MCF 10A (cell line): ENCODE measurements at regions of chr11 and their contacts with region 1.

Region 1: GRCh38 chr11:74929431-74930363 is 19.2 kb downstream of the XRRA1 start:
- DNase-seq: peak; percentile 94
- H3K4me3 Mint-ChIP-seq: no peak overlapping the region
- H3K27ac Mint-ChIP-seq: no peak overlapping the region
- H3K4me1 Mint-ChIP-seq: peaks cover 4% of the 10 kb centered on the region
- H3K27me3 Mint-ChIP-seq: no peaks in the 10 kb centered on the region
- CTCF ChIP-seq: peak; percentile 84

Region 2: GRCh38 chr11:74776546-74776945 is 153.2 kb before region 1 on chr11:
- CTCF ChIA-PET with region 1: no interaction called
- POLR2A ChIA-PET with region 1: no interaction called
- intact Hi-C with region 1: no loop called
- DNase-seq: no peak
- H3K4me3 Mint-ChIP-seq: no peak overlapping the region
- H3K27ac Mint-ChIP-seq: no peak overlapping the region
- H3K4me1 Mint-ChIP-seq: peaks cover 18% of the 10 kb centered on the region
- H3K27me3 Mint-ChIP-seq: no peaks in the 10 kb centered on the region
- CTCF ChIP-seq: no peak

Region 3: DNA sequence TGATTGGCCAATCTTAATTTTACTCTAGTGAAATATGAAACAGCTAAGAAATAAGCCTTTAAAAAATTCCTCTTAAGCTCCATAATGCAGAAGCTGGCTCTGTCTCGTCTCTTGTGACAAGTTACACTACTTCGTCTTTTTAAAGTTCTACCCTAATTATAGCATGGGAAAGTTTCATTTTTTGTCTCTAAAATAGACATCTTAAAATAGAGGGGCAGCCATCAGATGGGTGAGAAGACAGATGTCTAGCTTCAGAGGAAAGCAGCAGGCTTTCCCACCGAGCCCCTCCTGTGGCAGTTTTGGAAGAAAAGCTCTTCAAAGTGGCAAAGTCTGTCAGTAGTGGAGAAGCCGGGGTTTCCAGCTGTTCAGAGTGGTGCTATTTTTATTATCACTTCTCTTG is 20.3 kb before region 1 on chr11:
- CTCF ChIA-PET with region 1: interaction called, 12 read pairs
- POLR2A ChIA-PET with region 1: interaction called, 3 read pairs
- intact Hi-C with region 1: no loop called
- DNase-seq: no peak
- H3K4me3 Mint-ChIP-seq: no peak overlapping the region
- H3K27ac Mint-ChIP-seq: no peak overlapping the region
- H3K4me1 Mint-ChIP-seq: no peaks in the 10 kb centered on the region
- H3K27me3 Mint-ChIP-seq: no peaks in the 10 kb centered on the region
- CTCF ChIP-seq: no peak

Region 4: GRCh38 chr11:74966651-74967050 is 37.0 kb after region 1 on chr11:
- CTCF ChIA-PET with region 1: interaction called, 12 read pairs
- POLR2A ChIA-PET with region 1: no interaction called
- intact Hi-C with region 1: no loop called
- DNase-seq: peak; percentile 61
- H3K4me3 Mint-ChIP-seq: no peak overlapping the region
- H3K27ac Mint-ChIP-seq: peak overlapping the region; percentile 73
- H3K4me1 Mint-ChIP-seq: peaks cover 18% of the 10 kb centered on the region
- H3K27me3 Mint-ChIP-seq: no peaks in the 10 kb centered on the region
- CTCF ChIP-seq: no peak

Region 5: DNA sequence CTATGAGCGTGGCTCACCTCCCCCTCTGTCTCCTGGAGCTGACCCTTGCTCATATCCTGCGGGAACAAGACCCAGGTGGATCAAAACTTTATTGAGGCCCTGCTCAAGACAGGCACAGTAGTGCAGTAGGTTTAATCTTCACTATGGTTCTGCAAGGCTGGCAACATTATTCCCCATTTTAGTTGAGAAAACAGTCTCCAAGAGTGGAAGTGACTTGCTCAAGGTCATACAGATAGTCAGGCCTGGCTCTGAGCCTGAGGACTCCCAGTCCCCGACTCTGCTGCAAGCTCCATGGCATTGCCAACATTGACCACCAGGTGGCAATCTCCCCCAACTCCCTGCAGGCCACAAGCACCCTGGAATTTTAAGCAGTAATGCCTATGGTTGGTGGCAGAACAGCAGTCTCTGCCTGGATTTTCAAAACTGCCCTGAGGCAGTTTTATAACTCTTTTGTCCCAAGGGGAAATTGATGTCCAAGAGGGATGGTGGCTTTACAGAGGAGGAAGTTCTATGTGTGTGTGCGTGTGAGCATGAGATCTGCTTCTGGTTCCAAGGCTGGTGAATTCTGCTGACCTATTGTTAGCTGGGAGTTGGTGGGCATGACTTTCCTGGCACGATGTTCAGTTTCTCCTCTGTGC is 93.2 kb after region 1 on chr11:
- CTCF ChIA-PET with region 1: interaction called, 32 read pairs
- POLR2A ChIA-PET with region 1: interaction called, 5 read pairs
- intact Hi-C with region 1: no loop called
- DNase-seq: peak; percentile 76
- H3K4me3 Mint-ChIP-seq: no peak overlapping the region
- H3K27ac Mint-ChIP-seq: no peak overlapping the region
- H3K4me1 Mint-ChIP-seq: no peaks in the 10 kb centered on the region
- H3K27me3 Mint-ChIP-seq: peaks cover 2% of the 10 kb centered on the region
- CTCF ChIP-seq: peak; percentile 97

Region 6: DNA sequence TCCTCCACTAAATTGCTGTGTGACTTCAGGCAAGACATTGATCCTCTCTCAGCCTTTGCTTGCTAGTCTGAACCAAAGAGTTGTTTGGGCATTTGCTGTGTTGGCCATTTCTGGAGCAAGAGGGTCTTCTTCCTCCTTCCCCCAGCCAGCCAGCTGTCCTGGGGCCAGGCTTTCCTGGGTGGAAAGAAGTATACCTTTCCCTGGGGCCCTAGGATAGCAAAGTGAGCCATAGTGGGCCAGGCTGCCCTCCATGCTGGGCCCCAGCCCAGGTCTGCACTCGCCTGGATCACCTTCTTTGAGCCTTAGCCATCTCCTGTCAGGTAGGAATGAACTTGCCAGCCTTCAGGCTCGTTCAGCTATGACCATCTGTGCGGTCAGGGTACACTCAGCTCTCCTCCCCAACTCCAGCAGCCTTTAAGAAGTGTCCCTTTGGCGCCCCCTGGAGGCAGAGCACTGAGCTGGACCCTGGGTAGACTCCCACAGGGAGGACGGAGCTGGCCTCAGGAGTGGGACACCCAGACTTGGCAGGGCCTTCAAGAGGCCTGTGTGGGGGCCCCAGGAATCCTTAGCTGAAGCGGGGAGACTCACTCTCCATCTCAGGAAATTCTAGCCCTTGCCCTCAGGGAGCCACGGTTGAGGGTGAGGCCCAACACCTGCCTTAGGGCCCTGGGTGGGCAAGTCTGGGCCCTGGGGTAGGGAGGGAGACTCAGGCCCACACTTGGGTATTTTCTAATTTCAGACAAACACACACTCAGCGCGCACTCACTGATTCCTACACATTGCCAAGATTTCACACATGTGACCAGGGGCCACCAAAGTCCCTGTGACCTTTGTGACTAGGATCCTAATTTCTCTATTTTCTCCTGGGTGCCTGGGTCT is 275.2 kb after region 1 on chr11:
- CTCF ChIA-PET with region 1: interaction called, 21 read pairs
- POLR2A ChIA-PET with region 1: no interaction called
- intact Hi-C with region 1: loop called (anchors 1 kb)
- DNase-seq: peak; percentile 83
- H3K4me3 Mint-ChIP-seq: no peak overlapping the region
- H3K27ac Mint-ChIP-seq: no peak overlapping the region
- H3K4me1 Mint-ChIP-seq: no peaks in the 10 kb centered on the region
- H3K27me3 Mint-ChIP-seq: peaks cover 32% of the 10 kb centered on the region
- CTCF ChIP-seq: peak; percentile 83